Common myeloid progenitor, CD34-positive (primary cell): ENCODE measurements at regions of chr17 and their contacts with region 1.

Region 1: DNA sequence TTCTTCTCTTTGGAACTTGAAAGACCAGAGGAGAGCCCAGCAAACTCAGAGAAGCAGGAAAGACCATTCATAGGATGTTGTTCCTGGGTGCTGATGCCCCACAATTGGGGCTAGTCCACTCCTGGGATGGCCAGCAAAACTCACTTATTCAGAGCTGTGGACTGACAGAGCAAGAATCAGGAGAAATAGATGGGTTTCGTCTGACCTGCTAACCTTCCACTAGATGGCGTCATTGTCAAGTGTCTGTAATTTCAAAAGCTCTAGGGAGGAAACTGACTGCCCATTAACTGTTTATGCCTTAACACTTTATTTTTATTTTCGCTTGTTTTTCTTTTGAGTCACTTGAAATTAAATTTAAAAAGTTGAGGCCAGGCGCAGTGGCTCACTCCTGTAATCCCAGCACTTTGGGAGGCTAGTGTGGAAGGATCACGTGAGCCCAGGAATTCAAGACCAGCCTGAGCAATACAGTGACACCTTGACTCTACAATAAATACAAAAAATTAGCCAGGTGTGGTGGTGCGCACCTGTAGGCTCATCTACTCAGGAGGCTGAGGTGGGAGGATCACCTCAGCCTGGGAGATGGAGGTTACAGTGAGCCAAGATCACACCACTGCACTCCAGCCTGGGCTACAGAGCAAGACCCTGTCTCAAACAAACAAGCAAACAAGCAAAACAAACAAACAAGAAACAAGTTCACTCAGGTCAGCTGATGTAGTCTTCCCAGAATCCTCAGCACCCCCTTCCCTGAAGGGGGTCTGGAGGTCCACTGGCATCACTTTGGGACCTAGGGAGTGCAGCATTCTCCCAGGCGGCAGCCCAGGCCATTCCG is 28.6 kb upstream of the MILR1 start:
- DNase-seq: peak; percentile 78 to 90 (median 88)
- H3K4me3 ChIP-seq: no peak overlapping the region
- H3K27ac ChIP-seq: no peak overlapping the region
- H3K4me1 ChIP-seq: peaks cover 0 to 3% (median 1%) of the 10 kb centered on the region in 4 experiments
- H3K27me3 ChIP-seq: no peaks in the 10 kb centered on the region

Region 2: DNA sequence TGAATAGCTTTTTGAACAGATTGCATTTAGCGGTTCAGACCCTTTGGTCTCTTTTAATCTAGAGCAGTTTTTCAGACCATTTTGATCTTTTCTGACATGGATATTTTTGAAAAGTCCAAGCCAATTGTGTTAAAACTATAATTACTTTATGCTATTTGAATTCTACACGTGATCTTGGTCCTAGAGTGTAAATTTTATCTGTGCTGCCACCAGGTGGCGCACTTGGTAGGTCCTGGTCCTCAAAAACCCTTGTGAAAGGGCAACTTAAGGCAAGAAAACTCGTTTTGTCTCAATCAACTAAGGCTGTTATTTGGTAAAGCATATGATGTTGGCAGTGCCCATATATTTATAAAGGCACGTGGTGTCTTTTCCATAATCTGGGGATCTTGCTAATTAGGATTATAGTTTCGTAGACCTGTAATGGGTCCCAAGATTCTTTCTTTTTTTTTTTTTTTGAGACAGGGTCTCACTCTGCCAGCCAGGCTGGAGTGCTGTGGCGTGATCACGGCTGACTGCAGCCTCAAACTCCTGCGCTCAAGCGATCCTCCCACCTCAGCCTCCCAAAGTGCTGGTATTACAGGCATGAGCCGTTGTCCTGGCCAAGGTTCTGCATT is 113.4 kb before region 1 on chr17:
- CTCF ChIA-PET with region 1: interaction called, 148 read pairs
- POLR2A ChIA-PET with region 1: no interaction called
- DNase-seq: peak; percentile 76 to 90 (median 84)
- H3K4me3 ChIP-seq: no peak overlapping the region
- H3K27ac ChIP-seq: no peak overlapping the region
- H3K4me1 ChIP-seq: no peaks in the 10 kb centered on the region
- H3K27me3 ChIP-seq: no peaks in the 10 kb centered on the region

Region 3: GRCh38 chr17:64357191-64357981 is 63.0 kb before region 1 on chr17:
- CTCF ChIA-PET with region 1: interaction called, 36 read pairs
- POLR2A ChIA-PET with region 1: no interaction called
- DNase-seq: no peak
- H3K4me3 ChIP-seq: no peak overlapping the region
- H3K27ac ChIP-seq: no peak overlapping the region
- H3K4me1 ChIP-seq: peaks cover 0 to 13% (median 0%) of the 10 kb centered on the region in 4 experiments
- H3K27me3 ChIP-seq: no peaks in the 10 kb centered on the region

Region 4: DNA sequence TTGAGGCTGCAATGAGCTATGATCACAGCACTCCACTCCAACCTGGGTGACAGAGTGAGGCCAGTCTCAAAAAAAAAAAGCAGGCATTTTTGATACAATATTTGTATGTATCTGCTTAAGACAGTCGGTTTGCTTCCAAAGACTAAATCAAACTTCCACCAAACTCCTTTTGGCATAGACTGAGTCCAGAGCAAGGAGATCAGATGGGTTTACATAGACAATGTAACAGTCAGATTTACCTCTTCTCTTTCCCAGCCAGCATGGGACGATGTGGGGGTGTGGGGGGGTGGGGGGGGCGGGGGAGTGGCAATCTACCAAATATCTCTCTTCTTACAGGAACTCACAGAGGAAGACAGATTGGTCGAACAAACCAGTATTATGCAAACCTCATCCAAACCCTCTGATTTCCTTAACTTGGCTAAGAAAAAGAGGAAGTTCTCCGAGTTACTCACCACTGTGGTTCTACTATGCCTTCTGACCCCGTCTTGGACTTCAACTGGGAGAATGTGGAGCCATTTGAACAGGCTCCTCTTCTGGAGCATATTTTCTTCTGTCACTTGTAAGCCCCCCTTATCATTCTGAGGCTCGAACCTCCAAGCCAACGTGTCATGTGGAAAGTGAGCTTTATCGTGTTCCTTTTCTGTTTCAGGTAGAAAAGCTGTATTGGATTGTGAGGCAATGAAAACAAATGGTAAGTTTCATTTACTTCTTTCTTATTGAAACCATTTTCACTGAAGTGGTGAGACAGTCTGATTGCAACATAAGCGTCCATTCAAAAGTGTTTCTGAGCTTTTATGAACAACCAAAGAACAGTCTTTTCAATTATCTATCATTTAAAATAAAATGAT is 28.5 kb after region 1 on chr17 and contains the start of gene MILR1:
- CTCF ChIA-PET with region 1: interaction called, 13 read pairs
- POLR2A ChIA-PET with region 1: no interaction called
- DNase-seq: peak; percentile 97 to 99 (median 98)
- H3K4me3 ChIP-seq: peak within 1 kb of the TSS in 6 of 7 experiments; percentile 2 to 66 (median 50)
- H3K27ac ChIP-seq: peak within 1 kb of the TSS; percentile 35 to 79
- H3K4me1 ChIP-seq: peaks cover 11 to 49% (median 40%) of the 10 kb centered on the region in 4 experiments
- H3K27me3 ChIP-seq: no peaks in the 10 kb centered on the region

Region 5: GRCh38 chr17:64477849-64478248 is 57.5 kb after region 1 on chr17:
- CTCF ChIA-PET with region 1: interaction called, 47 read pairs
- POLR2A ChIA-PET with region 1: interaction called, 4 read pairs
- DNase-seq: no peak
- H3K4me3 ChIP-seq: no peak overlapping the region
- H3K27ac ChIP-seq: no peak overlapping the region
- H3K4me1 ChIP-seq: no peaks in the 10 kb centered on the region
- H3K27me3 ChIP-seq: no peaks in the 10 kb centered on the region

Region 6: GRCh38 chr17:64565563-64565962 is 145.2 kb after region 1 on chr17:
- CTCF ChIA-PET with region 1: no interaction called
- POLR2A ChIA-PET with region 1: no interaction called
- DNase-seq: peak in 2 of 3 donors; percentile 37 to 55
- H3K4me3 ChIP-seq: no peak overlapping the region
- H3K27ac ChIP-seq: no peak overlapping the region
- H3K4me1 ChIP-seq: no peaks in the 10 kb centered on the region
- H3K27me3 ChIP-seq: no peaks in the 10 kb centered on the region

Region 7: DNA sequence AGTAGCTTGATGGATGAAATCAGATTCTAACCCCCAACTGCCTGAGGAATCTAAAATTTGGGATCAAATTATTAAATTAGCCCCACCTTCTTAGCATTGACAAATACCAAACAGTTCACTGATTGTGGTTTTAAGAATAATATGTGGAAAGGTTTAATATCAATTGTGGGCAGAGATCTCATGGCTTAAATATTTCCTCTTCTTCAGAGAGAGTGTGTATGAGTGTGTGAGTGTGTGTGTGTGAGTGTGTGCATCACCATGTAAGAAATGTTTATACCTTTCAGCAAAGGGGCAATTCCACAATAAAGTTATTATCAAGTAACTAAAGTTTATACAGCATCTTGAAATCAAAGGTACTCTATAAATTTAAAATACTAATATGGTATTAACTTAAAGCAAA is 238.6 kb after region 1 on chr17:
- CTCF ChIA-PET with region 1: no interaction called
- POLR2A ChIA-PET with region 1: no interaction called
- DNase-seq: peak; percentile 32 to 43 (median 38)
- H3K4me3 ChIP-seq: no peak overlapping the region
- H3K27ac ChIP-seq: no peak overlapping the region
- H3K4me1 ChIP-seq: peaks cover 6 to 32% (median 20%) of the 10 kb centered on the region in 4 experiments
- H3K27me3 ChIP-seq: no peaks in the 10 kb centered on the region